ENCODE measurements at regions of chr4 and their contacts with region 1.

Region 1: GRCh38 chr4:186770481-186771175 is 47.0 kb upstream of the FAT1 start:
- DNase-seq: peak; percentile 72
- H3K4me3 Mint-ChIP-seq: no peak overlapping the region
- H3K27ac Mint-ChIP-seq: peak overlapping the region; percentile 47
- H3K4me1 Mint-ChIP-seq: peaks cover 13% of the 10 kb centered on the region
- H3K27me3 Mint-ChIP-seq: no peaks in the 10 kb centered on the region
- CTCF ChIP-seq: no peak

Region 2: DNA sequence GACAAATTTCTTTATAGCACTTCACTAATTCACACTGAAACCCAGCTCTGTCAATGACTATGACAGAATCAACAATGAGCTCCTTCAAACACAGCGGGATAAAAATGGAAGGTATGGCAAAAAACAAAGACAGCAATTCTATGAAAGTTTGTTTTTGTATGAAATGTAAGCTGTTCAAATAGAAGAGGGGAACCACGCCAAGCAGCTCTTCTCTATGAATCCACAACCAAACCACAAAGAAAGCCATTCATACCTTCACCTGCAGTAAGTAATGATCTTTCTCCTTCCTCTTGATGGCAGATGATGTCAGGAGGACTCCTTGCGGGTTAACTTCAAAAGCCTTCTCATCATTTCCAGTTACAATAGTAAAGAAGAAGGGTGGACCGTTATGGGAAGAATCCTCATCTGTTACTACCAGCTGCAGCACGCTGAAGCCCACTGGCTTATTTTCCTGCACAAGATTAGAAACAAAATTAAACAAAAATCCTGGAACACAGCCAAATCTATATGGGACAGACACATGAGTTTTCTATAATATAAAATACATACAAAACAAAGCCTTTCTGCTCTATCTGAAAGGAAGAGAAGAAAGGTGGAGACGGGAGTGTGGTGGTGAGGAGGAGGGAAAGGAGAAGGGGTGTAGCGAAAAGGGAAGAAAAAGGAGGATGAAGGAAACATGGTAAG is 166.4 kb before region 1 on chr4:
- CTCF ChIA-PET with region 1: no interaction called
- POLR2A ChIA-PET with region 1: no interaction called
- intact Hi-C with region 1: no loop called
- DNase-seq: no peak
- H3K4me3 Mint-ChIP-seq: no peak overlapping the region
- H3K27ac Mint-ChIP-seq: peak overlapping the region; percentile 62
- H3K4me1 Mint-ChIP-seq: peaks cover 19% of the 10 kb centered on the region
- H3K27me3 Mint-ChIP-seq: no peaks in the 10 kb centered on the region
- CTCF ChIP-seq: no peak

Region 3: DNA sequence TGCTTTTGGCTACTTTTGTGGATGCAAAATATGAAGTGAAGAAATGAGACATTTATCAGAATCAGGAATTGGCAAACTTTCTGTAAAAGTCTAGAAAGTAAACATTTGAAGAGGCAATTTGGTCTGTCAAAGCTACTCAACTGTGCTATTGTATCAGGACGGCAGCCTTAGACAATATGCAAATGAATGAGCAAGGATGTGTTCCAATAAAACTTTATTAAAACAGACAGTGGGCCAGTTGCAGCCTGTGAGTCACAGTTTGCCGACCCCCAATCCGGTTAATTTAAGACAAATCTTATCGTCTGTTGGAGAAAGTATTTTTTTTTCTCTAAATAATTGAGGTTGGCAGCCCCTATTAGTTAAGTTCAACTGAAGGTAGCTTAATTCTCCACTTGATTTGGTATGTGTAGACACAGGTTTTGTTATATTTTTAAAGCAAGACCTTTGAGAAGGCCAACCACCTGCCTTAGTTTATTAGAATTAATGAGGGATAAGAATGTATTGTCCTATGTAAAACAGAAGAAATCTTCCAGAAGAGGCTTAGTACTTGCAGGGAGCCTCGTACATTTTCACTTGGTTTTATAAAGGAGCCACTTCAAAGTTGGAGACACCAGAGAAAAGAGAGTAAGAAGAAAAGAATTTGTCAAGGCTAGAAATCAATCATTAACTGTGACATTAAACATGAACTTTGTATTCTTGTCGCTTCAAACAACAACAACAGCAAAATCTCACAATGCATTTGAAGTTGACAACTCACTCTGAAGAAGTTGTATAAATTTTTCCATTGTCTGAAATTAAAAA is 34.6 kb after region 1 on chr4:
- CTCF ChIA-PET with region 1: no interaction called
- POLR2A ChIA-PET with region 1: no interaction called
- intact Hi-C with region 1: no loop called
- DNase-seq: no peak
- H3K4me3 Mint-ChIP-seq: no peak overlapping the region
- H3K27ac Mint-ChIP-seq: no peak overlapping the region
- H3K4me1 Mint-ChIP-seq: no peaks in the 10 kb centered on the region
- H3K27me3 Mint-ChIP-seq: no peaks in the 10 kb centered on the region
- CTCF ChIP-seq: no peak

Region 4: DNA sequence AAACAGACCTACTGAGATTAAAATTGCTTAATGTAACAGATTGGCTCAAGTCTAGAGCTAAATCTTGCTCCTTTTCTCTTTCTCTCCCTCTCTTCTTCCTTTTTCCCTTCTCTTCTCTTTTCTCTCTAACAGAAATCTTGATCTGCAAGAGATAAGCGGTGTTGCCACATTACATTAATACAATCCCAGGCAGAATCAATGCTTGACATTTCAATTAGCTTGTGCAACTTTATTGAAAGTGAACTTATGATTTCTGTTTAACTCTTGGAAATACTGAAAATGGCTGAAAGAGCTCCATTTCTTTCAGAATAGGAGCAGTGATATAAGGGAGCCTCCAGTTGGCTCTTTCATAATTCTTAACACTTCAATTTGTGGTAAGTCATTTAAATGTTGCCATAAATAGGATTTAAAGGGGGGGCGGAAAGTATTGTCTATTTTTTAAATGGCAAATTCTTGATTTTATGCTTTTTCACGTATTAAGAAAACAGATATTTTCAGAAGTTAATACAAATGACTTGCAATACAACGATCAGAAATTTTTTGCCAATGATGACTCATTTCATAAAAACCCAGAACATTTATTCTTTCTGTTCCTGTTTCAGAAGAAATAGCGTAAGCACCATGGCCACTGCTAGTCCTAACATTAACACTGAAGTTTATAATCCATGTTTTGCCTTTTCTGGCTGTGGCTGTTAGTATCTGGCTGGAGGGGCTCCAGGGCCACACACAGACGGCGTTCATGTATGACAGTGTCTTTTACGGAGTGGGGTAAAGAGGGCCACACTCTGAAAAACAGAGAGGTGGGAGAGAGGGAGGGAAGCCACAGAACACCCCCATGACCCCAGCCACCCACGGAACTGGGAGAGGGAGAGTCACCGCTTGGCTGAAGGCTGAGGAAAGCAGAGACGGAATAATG is 68.8 kb after region 1 on chr4:
- CTCF ChIA-PET with region 1: no interaction called
- POLR2A ChIA-PET with region 1: interaction called, 3 read pairs
- intact Hi-C with region 1: loop called (anchors 5 kb)
- DNase-seq: peak; percentile 48
- H3K4me3 Mint-ChIP-seq: peak overlapping the region; percentile 48
- H3K27ac Mint-ChIP-seq: peak overlapping the region; percentile 99
- H3K4me1 Mint-ChIP-seq: peaks cover 19% of the 10 kb centered on the region
- H3K27me3 Mint-ChIP-seq: no peaks in the 10 kb centered on the region
- CTCF ChIP-seq: no peak

Measured in MCF 10A (cell line).